ENCODE measurements at regions of chr21 and their contacts with region 1.

Region 1: DNA sequence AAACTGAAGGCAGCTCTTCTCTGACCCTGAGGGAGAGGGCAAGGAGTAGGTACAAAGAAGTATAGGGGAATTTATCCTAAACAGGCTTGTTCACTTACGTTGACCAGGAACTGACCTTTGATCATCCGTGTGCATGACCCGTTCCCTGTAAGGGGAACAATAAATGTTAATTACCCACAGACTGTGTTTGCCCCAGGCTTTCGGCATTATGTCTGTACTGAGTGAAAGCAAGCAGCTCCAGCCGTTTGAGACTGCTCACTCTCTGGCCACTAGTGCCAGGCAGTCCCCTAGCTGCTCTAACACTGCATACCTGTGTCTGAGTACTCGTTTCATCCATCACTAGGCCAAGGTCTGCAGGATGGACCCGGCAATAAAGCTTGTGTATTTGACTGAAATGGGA is 1365.3 kb downstream of the NCAM2 start:
- DNase-seq: no peak
- H3K4me3 ChIP-seq: no peak overlapping the region
- H3K27ac ChIP-seq: no peak overlapping the region
- H3K4me1 ChIP-seq: no peaks in the 10 kb centered on the region
- CTCF ChIP-seq: no peak

Region 2: DNA sequence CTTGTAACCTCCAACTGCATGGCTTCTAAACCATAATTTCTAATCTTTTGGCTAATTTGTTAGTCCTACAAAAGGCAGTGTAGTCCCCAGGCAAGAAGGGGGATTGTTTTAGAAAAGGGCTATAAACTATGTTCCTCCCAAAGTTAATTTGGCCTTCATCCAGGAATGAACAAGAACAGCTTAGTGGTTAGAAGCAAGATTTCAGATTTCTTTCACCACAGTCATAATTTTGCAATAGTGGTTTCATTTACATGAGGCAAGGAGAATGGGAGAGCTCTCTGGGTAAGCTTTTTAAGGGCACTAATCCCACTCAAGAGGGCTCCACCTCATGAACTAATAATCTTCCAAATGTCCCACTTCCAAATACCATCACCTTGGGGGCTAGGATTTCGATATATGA is 11.4 kb before region 1 on chr21:
- CTCF ChIA-PET with region 1: no interaction called
- POLR2A ChIA-PET with region 1: interaction called, 16 read pairs
- intact Hi-C with region 1: no loop called
- DNase-seq: no peak
- H3K4me3 ChIP-seq: no peak overlapping the region
- H3K27ac ChIP-seq: no peak overlapping the region
- H3K4me1 ChIP-seq: no peaks in the 10 kb centered on the region
- CTCF ChIP-seq: no peak

Region 3: GRCh38 chr21:22421416-22422180 is 58.1 kb after region 1 on chr21:
- CTCF ChIA-PET with region 1: no interaction called
- POLR2A ChIA-PET with region 1: no interaction called
- intact Hi-C with region 1: no loop called
- DNase-seq: no peak
- H3K4me3 ChIP-seq: no peak overlapping the region
- H3K27ac ChIP-seq: no peak overlapping the region
- H3K4me1 ChIP-seq: no peaks in the 10 kb centered on the region
- CTCF ChIP-seq: no peak

Measured in OCI-LY7 (cell line).